CD4-positive, alpha-beta memory T cell (primary cell): ENCODE measurements at regions of chr4 and their contacts with region 1.

Region 1: DNA sequence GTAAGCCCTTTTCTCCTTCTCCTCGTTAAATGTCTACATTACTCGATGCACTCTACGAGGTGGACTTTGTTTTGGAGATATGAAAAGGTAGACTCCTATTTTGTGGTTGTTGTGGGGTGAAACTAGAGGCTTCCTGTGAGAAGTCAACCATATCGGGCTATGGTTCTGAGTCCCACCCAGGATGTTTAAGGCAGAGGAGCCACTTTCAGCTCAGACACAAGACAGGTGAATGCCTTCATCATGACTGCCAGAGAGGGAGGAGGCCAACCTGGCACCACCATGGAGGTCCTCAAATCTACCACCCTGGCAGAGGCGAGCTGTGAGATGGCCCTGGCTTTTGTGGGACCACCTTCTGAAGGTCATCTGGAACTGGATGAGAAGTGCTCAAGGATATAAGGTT is 154.4 kb upstream of the KLF3 start:
- DNase-seq: peak; percentile 67 to 77 (median 73)
- H3K4me3 ChIP-seq: peak overlapping the region; percentile 43 to 87
- H3K4me3 Mint-ChIP-seq: peak overlapping the region; percentile 77 to 91 (median 84)
- H3K27ac ChIP-seq: peak overlapping the region; percentile 63
- H3K27ac Mint-ChIP-seq: peak overlapping the region; percentile 77 to 96 (median 88)
- H3K4me1 ChIP-seq: peaks cover 89% of the 10 kb centered on the region
- H3K4me1 Mint-ChIP-seq: peaks cover 69 to 92% (median 79%) of the 10 kb centered on the region in 4 donors
- H3K27me3 ChIP-seq: no peaks in the 10 kb centered on the region
- H3K27me3 Mint-ChIP-seq: no peaks in the 10 kb centered on the region

Region 2: DNA sequence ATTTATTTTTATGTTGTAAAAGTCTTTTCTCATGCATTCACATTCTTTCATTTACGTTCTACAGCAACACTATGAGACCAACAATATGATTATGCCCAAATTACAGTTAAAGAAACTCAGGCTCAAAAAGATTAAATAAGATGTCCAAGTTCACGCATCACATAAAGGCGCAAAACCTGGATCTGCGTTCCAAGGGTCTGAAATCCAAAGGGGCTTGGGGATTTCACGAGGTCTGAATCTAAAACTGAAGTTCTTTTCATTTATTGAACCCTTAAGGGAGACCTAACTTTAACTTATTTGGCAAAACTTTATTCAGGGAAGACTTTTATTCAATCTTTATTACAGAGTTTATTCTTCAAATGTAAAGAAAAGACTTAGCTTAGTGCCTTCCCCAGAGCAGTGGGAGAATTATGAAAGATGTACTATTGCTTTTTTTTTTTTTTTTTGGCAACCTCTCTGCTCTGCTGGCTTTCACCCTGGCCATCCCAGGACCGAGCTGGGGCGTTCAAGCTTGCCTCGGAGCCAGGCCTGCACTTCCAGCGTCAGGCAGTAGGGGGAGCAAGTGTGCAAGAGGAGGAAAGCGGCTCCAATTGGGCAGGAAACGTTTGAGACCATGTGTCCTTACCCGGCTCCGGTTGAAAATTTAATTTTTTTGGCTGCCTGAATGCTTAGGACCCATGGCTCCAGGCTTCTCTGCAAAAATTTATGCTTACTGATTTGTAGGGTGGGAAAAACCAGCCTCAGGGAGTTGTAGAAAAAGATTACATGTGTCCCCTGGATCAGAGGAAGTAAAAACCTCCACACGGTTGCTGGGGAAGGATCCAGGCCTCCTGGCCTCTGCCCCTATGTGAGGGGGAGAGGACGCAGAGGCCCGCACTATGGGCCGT is 189.9 kb before region 1 on chr4:
- CTCF ChIA-PET with region 1: interaction called, 17 read pairs
- POLR2A ChIA-PET with region 1: interaction called, 12 read pairs
- intact Hi-C with region 1: loop called (anchors 5 kb)
- DNase-seq: peak; percentile 77 to 85 (median 80)
- H3K4me3 ChIP-seq: peak overlapping the region in 1 of 2 donors; percentile 42
- H3K4me3 Mint-ChIP-seq: peak overlapping the region; percentile 80 to 96 (median 89)
- H3K27ac ChIP-seq: peak overlapping the region; percentile 65
- H3K27ac Mint-ChIP-seq: peak overlapping the region; percentile 88 to 98 (median 95)
- H3K4me1 ChIP-seq: peaks cover 30% of the 10 kb centered on the region
- H3K4me1 Mint-ChIP-seq: peaks cover 26 to 54% (median 41%) of the 10 kb centered on the region in 4 donors
- H3K27me3 ChIP-seq: no peaks in the 10 kb centered on the region
- H3K27me3 Mint-ChIP-seq: no peaks in the 10 kb centered on the region

Region 3: GRCh38 chr4:38455092-38455862 is 54.3 kb before region 1 on chr4:
- CTCF ChIA-PET with region 1: no interaction called
- POLR2A ChIA-PET with region 1: interaction called, 4 read pairs
- intact Hi-C with region 1: loop called (anchors 5 kb)
- DNase-seq: peak in 3 of 5 donors; percentile 3 to 14 (median 13)
- H3K4me3 ChIP-seq: no peak overlapping the region
- H3K4me3 Mint-ChIP-seq: peak overlapping the region in 6 of 8 donors; percentile 21 to 73 (median 58)
- H3K27ac ChIP-seq: no peak overlapping the region
- H3K27ac Mint-ChIP-seq: peak overlapping the region in 4 of 7 donors; percentile 31 to 58 (median 42)
- H3K4me1 ChIP-seq: peaks cover 20% of the 10 kb centered on the region
- H3K4me1 Mint-ChIP-seq: peaks cover 12 to 30% (median 22%) of the 10 kb centered on the region in 4 donors
- H3K27me3 ChIP-seq: no peaks in the 10 kb centered on the region
- H3K27me3 Mint-ChIP-seq: peaks cover 0 to 2% of the 10 kb centered on the region in 2 donors

Region 4: GRCh38 chr4:38499101-38499500 is 10.4 kb before region 1 on chr4:
- CTCF ChIA-PET with region 1: interaction called, 10 read pairs
- POLR2A ChIA-PET with region 1: interaction called, 5 read pairs
- intact Hi-C with region 1: no loop called
- DNase-seq: no peak
- H3K4me3 ChIP-seq: no peak overlapping the region
- H3K4me3 Mint-ChIP-seq: no peak overlapping the region
- H3K27ac ChIP-seq: no peak overlapping the region
- H3K27ac Mint-ChIP-seq: no peak overlapping the region
- H3K4me1 ChIP-seq: peaks cover 5% of the 10 kb centered on the region
- H3K4me1 Mint-ChIP-seq: peaks cover 3 to 9% (median 8%) of the 10 kb centered on the region in 4 donors
- H3K27me3 ChIP-seq: no peaks in the 10 kb centered on the region
- H3K27me3 Mint-ChIP-seq: no peaks in the 10 kb centered on the region

Region 5: DNA sequence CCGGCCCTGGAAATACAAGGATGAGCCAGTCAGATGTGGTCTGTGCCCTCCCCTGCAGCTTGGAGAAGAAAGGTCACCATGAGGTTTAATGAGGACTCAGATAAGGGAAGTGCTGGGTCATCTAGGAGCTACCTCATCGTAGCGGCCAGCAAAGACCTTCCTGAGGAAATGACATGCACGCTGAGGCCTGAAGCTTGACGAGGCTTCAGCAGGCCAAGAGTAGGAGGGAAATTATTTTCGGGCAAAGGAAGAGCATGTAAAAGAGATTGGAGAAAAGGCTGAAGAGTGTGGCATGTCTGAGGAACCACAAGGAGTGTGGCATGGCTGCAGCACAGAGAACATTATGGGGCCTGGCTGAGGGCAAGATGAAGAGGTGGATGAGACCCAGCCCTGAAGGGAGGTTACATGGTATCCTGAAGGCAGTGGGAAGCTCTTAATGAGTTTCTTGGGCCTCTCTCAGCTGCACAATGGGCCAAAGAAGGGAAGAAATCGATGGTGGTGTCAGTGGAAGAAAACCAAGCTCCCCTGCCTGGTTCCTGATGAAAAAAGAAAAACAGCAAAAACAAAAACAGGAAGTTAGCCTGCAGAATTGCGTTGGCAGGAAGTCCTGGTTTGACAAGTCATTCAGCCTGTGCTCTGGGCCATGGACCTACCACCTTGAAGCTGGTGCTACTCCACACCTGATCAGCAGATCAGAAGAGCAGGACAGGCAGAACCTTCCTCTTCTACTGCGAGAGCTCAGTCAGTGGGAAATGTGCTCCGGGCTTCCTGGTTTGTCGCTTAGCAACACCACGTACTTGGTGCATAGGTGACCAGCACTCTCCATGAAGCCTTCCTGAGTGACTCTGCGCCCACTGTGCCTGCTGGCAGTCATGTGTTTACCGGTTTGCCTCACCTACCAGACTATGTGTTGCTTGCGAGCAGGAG is 19.9 kb after region 1 on chr4:
- CTCF ChIA-PET with region 1: interaction called, 8 read pairs
- POLR2A ChIA-PET with region 1: interaction called, 32 read pairs
- intact Hi-C with region 1: loop called (anchors 2 kb)
- DNase-seq: peak; percentile 55 to 75 (median 62)
- H3K4me3 ChIP-seq: peak overlapping the region in 1 of 2 donors; percentile 1
- H3K4me3 Mint-ChIP-seq: peak overlapping the region in 7 of 8 donors; percentile 49 to 81 (median 58)
- H3K27ac ChIP-seq: peak overlapping the region; percentile 3
- H3K27ac Mint-ChIP-seq: peak overlapping the region; percentile 82 to 92 (median 88)
- H3K4me1 ChIP-seq: peaks cover 43% of the 10 kb centered on the region
- H3K4me1 Mint-ChIP-seq: peaks cover 23 to 69% (median 42%) of the 10 kb centered on the region in 4 donors
- H3K27me3 ChIP-seq: no peaks in the 10 kb centered on the region
- H3K27me3 Mint-ChIP-seq: no peaks in the 10 kb centered on the region

Region 6: DNA sequence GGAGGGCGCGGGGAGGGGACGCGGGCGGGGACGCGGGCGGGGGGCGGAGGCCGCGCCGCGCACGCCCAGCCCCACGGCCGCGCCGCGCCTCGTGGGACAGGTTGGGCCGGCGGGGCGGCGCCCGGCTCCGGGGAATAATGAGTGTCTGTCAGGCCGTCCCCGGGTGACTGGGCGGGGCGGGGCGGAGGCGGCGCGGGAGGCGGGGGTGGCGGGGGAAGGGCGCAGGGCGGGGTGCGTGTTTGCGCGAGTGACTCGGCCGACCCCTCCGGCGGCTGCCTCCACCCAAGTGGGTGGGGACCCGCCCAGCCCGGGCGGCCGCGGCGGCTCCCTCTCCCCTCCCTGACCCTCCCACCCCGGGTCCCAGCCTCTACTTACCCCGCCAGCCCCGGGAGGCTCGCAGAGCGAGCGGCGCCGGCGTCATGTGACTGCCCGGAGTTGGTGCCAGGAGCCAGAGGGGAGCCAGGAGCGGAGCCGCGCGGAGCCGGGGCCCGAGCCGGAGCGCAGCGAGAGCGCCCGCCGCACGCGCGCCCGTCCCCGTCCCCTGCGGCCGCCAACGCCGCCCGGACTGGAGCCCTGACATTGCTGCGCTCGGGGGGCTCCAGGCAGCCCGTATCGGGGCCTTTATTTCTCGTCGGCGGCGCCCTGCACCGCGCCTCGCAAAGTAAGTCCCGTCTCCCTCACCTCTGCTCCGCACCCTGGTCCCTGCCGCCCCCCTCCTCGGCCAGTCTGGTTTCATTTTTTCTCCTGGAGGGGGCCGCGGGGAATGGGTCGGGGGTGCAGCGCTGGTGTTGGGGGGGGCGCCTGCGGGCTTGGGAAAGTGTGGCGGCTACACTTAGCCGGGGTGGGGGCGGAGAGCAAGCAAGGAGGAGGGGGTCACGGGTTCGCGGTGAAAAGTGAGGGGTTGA is 154.5 kb after region 1 on chr4 and contains the start of gene KLF3:
- CTCF ChIA-PET with region 1: interaction called, 5 read pairs
- POLR2A ChIA-PET with region 1: interaction called, 108 read pairs
- intact Hi-C with region 1: loop called (anchors 5 kb)
- DNase-seq: peak; percentile 93 to 96 (median 94)
- H3K4me3 ChIP-seq: peak within 1 kb of the TSS; percentile 83 to 92
- H3K4me3 Mint-ChIP-seq: peak within 1 kb of the TSS; percentile 89 to 100 (median 98)
- H3K27ac ChIP-seq: peak within 1 kb of the TSS; percentile 92
- H3K27ac Mint-ChIP-seq: peak within 1 kb of the TSS; percentile 91 to 100 (median 99)
- H3K4me1 ChIP-seq: peaks cover 46% of the 10 kb centered on the region
- H3K4me1 Mint-ChIP-seq: peaks cover 40 to 80% (median 56%) of the 10 kb centered on the region in 4 donors
- H3K27me3 ChIP-seq: no peaks in the 10 kb centered on the region
- H3K27me3 Mint-ChIP-seq: no peaks in the 10 kb centered on the region
- total RNA-seq, gene KLF3: 119 to 122 TPM